Activated CD8-positive, alpha-beta T cell treated with anti-CD3 and anti-CD28 coated beads for 36 hours (primary cell): ENCODE measurements at regions of chr6 and their contacts with region 1.

Region 1: DNA sequence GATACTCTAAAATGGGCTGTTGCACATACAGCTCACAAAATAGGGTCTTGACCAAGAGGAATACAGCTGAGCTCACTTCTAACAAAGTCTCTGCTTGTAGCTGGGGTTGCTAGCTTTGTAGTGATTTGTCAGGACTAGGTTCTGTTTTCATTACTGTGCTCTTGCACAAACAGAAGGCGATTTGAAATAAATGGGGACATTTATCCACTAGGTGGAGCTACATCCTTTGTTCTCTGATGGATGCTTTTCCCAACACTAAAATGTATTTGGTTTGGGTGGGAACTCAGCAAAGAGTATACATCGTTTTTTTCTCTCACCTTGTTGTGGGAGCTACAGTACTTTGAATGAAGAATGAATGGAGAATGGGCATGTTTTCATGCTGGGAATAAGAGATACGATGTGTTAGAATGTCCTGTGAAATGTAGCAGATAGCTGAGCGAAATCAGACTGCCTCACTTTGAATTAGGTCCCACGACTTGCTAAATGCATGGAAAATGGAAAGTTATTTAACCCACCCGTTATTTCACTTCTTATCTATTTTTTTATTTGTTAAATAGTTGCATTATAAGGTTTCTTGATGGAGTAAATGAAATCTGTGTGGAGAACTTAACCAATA is 494.7 kb upstream of the MAP3K7 start:
- DNase-seq: no peak
- ATAC-seq: no peak
- H3K4me3 Mint-ChIP-seq: no peak overlapping the region
- H3K27ac Mint-ChIP-seq: no peak overlapping the region
- H3K4me1 Mint-ChIP-seq: no peaks in the 10 kb centered on the region
- H3K27me3 Mint-ChIP-seq: no peaks in the 10 kb centered on the region
- CTCF ChIP-seq: peak; percentile 68

Region 2: GRCh38 chr6:90044833-90045381 is 1036.7 kb before region 1 on chr6:
- CTCF ChIA-PET with region 1: no interaction called
- POLR2A ChIA-PET with region 1: no interaction called
- intact Hi-C with region 1: no loop called
- DNase-seq: no peak
- ATAC-seq: peak; percentile 54
- H3K4me3 Mint-ChIP-seq: no peak overlapping the region
- H3K27ac Mint-ChIP-seq: no peak overlapping the region
- H3K4me1 Mint-ChIP-seq: peaks cover 32% of the 10 kb centered on the region
- H3K27me3 Mint-ChIP-seq: no peaks in the 10 kb centered on the region
- CTCF ChIP-seq: no peak

Region 3: GRCh38 chr6:90885611-90886056 is 195.9 kb before region 1 on chr6:
- CTCF ChIA-PET with region 1: no interaction called
- POLR2A ChIA-PET with region 1: no interaction called
- intact Hi-C with region 1: no loop called
- DNase-seq: no peak
- ATAC-seq: no peak
- H3K4me3 Mint-ChIP-seq: no peak overlapping the region
- H3K27ac Mint-ChIP-seq: no peak overlapping the region
- H3K4me1 Mint-ChIP-seq: no peaks in the 10 kb centered on the region
- H3K27me3 Mint-ChIP-seq: peaks cover 3% of the 10 kb centered on the region
- CTCF ChIP-seq: no peak

Region 4: GRCh38 chr6:91097364-91097763 is 15.8 kb after region 1 on chr6:
- CTCF ChIA-PET with region 1: interaction called, 14 read pairs
- POLR2A ChIA-PET with region 1: no interaction called
- intact Hi-C with region 1: no loop called
- DNase-seq: no peak
- ATAC-seq: no peak
- H3K4me3 Mint-ChIP-seq: no peak overlapping the region
- H3K27ac Mint-ChIP-seq: no peak overlapping the region
- H3K4me1 Mint-ChIP-seq: no peaks in the 10 kb centered on the region
- H3K27me3 Mint-ChIP-seq: no peaks in the 10 kb centered on the region
- CTCF ChIP-seq: no peak

Region 5: DNA sequence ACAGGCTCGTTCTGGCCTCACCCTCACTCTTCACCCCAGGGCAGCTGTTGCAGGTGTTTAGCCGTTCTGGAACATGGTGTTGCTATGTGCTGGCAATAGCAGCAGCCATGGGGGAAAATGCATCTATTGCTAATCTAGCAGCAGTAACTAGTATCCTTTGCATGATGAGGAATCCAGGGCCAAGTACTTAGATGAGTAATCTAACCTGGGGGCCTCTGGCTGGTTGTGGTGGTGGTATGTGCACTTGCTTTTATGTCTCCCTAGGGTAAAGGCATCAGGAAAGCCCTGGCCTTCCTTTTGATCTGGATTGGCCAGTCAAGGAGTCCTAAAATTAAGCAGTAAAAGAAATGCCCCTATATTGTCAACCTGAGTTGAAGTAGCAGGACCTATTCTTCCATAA is 99.9 kb after region 1 on chr6:
- CTCF ChIA-PET with region 1: no interaction called
- POLR2A ChIA-PET with region 1: no interaction called
- intact Hi-C with region 1: no loop called
- DNase-seq: no peak
- ATAC-seq: no peak
- H3K4me3 Mint-ChIP-seq: no peak overlapping the region
- H3K27ac Mint-ChIP-seq: no peak overlapping the region
- H3K4me1 Mint-ChIP-seq: no peaks in the 10 kb centered on the region
- H3K27me3 Mint-ChIP-seq: no peaks in the 10 kb centered on the region
- CTCF ChIP-seq: no peak